ENCODE measurements at regions of chr14 and their contacts with region 1.

Region 1: DNA sequence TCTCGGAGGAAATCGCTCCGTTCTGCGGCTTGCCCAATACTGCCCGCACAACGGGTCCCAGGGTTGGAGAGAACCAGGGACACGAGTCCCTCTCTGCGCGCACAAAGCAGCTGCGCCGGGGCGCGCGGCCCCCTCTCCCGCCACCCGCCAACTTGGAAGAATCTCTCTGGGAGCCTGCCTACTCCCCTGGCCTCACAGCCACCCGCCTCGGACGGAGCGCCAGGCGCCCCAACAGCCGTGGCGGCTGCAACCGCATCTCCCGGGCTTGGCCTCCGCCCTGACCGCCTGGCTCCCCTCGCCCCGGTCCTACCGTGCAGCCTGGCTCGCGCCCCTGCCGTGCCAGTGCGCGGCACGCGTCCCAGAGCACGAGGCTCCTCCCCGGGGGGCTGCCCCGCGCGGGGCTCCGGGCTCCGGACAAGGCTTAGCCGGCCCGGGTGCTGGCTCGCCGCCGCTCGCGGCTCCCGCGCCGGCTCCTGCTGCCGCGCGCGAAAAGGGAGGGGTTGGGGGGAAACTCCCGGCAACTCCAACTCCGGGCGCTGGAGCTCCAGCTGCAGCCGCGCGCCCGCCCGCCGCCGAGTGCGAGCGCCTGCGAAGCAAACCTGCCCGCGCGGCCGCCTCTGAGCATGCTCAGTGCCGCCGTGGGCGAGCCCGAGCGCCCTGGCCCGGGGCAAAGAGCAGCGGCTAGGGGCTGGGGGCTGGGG is at the start of gene STXBP6:
- DNase-seq: peak; percentile 84 to 94 (median 89)
- ATAC-seq: peak; percentile 73 to 85 (median 81)
- H3K4me3 ChIP-seq: peak within 1 kb of the TSS; percentile 68 to 87 (median 76)
- H3K27ac ChIP-seq: peak within 1 kb of the TSS; percentile 83 to 92 (median 86)
- H3K4me1 ChIP-seq: peaks cover 30 to 53% (median 34%) of the 10 kb centered on the region in 3 donors
- H3K27me3 ChIP-seq: no peaks in the 10 kb centered on the region
- CTCF ChIP-seq: no peak
- total RNA-seq, gene STXBP6: 20.7 to 28.5 (median 25.0) TPM

Region 2: GRCh38 chr14:24806061-24806678 is 243.5 kb before region 1 on chr14:
- intact Hi-C with region 1: loop called in 2 of 3 experiments (anchors 5 to 10 kb)
- DNase-seq: peak; percentile 70 to 85 (median 78)
- ATAC-seq: peak; percentile 87 to 92 (median 90)
- H3K4me3 ChIP-seq: no peak overlapping the region
- H3K27ac ChIP-seq: peak overlapping the region in 2 of 4 donors; percentile 38 to 50
- H3K4me1 ChIP-seq: peaks cover 6 to 32% (median 22%) of the 10 kb centered on the region in 3 donors
- H3K27me3 ChIP-seq: no peaks in the 10 kb centered on the region
- CTCF ChIP-seq: peak; percentile 60 to 89 (median 74)